ENCODE measurements at regions of chr15 and their contacts with region 1.

Region 1: DNA sequence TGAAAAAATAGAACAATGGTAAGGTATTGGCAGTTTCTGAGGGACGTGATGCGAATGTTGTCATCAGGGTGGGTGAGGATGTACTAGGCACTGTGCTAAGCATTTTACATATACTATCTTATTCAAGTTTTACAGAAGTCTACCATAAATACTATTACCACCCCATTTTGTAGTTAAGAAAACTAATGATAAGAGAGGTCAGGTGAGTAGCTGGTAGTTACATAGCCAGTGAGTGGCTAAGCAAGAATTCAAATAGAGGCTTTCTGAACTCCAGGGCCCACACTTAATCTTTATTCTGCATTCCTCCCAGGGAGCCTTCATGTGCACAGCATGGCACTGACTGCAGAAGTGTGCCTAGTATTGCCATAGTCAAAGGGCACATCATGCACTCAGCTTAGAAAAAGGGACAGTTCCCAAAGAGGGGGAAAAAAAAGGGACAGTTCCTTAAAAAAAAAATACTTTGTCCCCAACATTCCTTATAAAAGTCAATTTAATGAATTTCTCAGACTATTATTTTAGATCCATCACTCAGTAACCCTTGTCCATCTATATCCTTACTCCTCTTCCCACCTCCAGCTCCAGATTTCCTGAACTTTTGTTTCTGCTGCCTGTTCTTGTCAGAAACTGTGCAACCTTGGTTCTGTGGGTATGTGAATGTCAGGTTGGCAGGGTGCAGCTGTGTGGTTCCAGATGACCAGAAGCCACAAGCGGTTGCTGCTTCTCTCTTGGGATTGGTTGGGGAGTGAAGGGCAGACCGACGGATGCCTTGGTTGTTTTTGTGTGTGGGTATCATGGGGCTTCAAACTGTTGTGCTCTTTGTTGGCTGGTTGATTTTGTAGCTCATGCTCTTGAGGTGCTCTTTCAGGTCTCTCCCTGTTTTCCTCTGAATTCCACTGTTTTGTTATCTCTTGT is 8.3 kb downstream of the MAPKBP1 start:
- DNase-seq: peak in 2 of 3 donors; percentile 28 to 49
- H3K4me3 ChIP-seq: no peak overlapping the region
- H3K27ac ChIP-seq: no peak overlapping the region
- H3K4me1 ChIP-seq: peaks cover 0 to 36% (median 21%) of the 10 kb centered on the region in 4 experiments
- H3K27me3 ChIP-seq: no peaks in the 10 kb centered on the region

Region 2: GRCh38 chr15:41795996-41796856 is 13.6 kb after region 1 on chr15:
- CTCF ChIA-PET with region 1: interaction called, 139 read pairs
- POLR2A ChIA-PET with region 1: interaction called, 3 read pairs
- DNase-seq: peak in 1 of 3 donors; percentile 21
- H3K4me3 ChIP-seq: peak overlapping the region in 2 of 7 experiments; percentile 28 to 38
- H3K27ac ChIP-seq: no peak overlapping the region
- H3K4me1 ChIP-seq: peaks cover 4 to 48% (median 39%) of the 10 kb centered on the region in 4 experiments
- H3K27me3 ChIP-seq: no peaks in the 10 kb centered on the region

Measured in common myeloid progenitor, CD34-positive (primary cell).